Activated CD4-positive, alpha-beta T cell treated with anti-CD3 and anti-CD28 coated beads, Interleukin-2, amount 10 ng/mL, durations not matched to agents 24 days and 14 days (primary cell): ENCODE measurements at regions of chr5 and their contacts with region 1.

Region 1: GRCh38 chr5:56200856-56201666 is 32.1 kb downstream of the ANKRD55 start:
- DNase-seq: peak; percentile 89
- H3K4me3 Mint-ChIP-seq: no peak overlapping the region
- H3K27ac Mint-ChIP-seq: no peak overlapping the region
- H3K4me1 Mint-ChIP-seq: peaks cover 23% of the 10 kb centered on the region
- H3K27me3 Mint-ChIP-seq: no peaks in the 10 kb centered on the region

Region 2: GRCh38 chr5:55159763-55160492 is 1041.1 kb before region 1 on chr5 and contains the start of gene GPX8:
- intact Hi-C with region 1: no loop called
- DNase-seq: peak; percentile 83
- H3K4me3 Mint-ChIP-seq: no peak within 1 kb of the TSS
- H3K27ac Mint-ChIP-seq: no peak within 1 kb of the TSS
- H3K4me1 Mint-ChIP-seq: no peaks in the 10 kb centered on the region
- H3K27me3 Mint-ChIP-seq: peaks cover 60% of the 10 kb centered on the region
- total RNA-seq, gene GPX8: not detected in 2 replicates

Region 3: GRCh38 chr5:55936100-55936693 is 264.9 kb before region 1 on chr5:
- intact Hi-C with region 1: loop called (anchors 1 kb)
- DNase-seq: peak; percentile 92
- H3K4me3 Mint-ChIP-seq: no peak overlapping the region
- H3K27ac Mint-ChIP-seq: no peak overlapping the region
- H3K4me1 Mint-ChIP-seq: peaks cover 2% of the 10 kb centered on the region
- H3K27me3 Mint-ChIP-seq: no peaks in the 10 kb centered on the region

Region 4: DNA sequence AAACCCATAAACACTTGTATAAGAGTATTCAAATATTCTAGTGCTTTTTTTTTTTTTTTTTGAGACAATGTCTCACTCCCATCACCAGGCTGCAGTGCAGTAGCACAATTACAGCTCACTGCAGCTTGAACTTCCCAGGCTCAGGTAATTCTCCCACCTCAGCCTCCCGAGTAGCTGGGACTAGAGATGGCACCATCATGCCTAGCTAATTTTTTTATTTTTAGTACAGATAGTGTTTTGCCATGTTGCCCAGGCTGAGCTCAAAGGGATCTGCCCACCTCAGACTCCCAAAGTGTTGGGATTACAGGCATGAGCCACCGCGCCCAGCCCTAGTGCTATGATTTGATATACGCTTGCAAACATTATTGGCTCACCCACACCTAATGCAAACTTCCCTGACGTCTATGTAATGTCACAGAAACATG is 218.1 kb before region 1 on chr5:
- intact Hi-C with region 1: loop called (anchors 1 kb)
- DNase-seq: peak; percentile 73
- H3K4me3 Mint-ChIP-seq: peak overlapping the region; percentile 43
- H3K27ac Mint-ChIP-seq: peak overlapping the region; percentile 22
- H3K4me1 Mint-ChIP-seq: peaks cover 61% of the 10 kb centered on the region
- H3K27me3 Mint-ChIP-seq: no peaks in the 10 kb centered on the region

Region 5: DNA sequence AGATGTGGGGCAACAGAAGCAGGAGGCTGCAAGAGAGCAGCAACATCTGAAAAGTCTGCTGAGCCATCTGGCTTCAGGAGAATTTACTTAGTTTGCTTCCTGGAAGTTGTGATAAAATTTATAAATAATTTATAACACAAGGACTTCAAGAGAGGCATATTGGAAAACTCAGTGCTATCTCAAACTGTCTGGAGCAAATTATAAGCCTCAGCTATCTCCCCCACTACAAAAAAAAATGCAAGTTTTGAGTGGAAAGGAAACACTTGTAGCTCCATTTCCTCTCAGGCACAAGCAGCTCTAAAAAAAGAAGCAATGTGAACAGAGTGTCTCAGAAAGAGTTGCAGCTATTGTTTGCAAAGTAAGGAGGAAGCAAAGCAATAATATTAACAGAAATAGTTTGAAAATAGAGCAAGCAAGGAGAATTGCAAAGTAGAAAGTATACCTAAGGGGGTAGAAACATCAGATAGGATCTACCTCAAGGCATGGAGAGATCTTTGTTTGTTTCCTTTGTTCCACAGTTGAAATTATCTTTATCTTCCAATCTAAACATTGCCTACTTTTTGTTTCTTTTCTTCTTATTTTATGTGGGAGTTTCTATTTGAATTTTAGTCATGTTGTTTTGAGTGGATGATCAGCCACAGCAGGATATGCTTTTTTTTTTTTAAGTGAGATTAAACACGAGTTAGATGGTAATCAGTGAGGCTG is 150.4 kb before region 1 on chr5:
- intact Hi-C with region 1: loop called (anchors 5 kb)
- DNase-seq: peak; percentile 66
- H3K4me3 Mint-ChIP-seq: peak overlapping the region; percentile 65
- H3K27ac Mint-ChIP-seq: peak overlapping the region; percentile 75
- H3K4me1 Mint-ChIP-seq: peaks cover 26% of the 10 kb centered on the region
- H3K27me3 Mint-ChIP-seq: peaks cover 5% of the 10 kb centered on the region

Region 6: GRCh38 chr5:56168066-56168478 is 33.0 kb before region 1 on chr5:
- intact Hi-C with region 1: loop called (anchors 5 kb)
- DNase-seq: no peak
- H3K4me3 Mint-ChIP-seq: no peak overlapping the region
- H3K27ac Mint-ChIP-seq: peak overlapping the region; percentile 30
- H3K4me1 Mint-ChIP-seq: peaks cover 36% of the 10 kb centered on the region
- H3K27me3 Mint-ChIP-seq: no peaks in the 10 kb centered on the region